Ovary (tissue), 10 donors: ENCODE measurements at regions of chr7 and their contacts with region 1.

Region 1: DNA sequence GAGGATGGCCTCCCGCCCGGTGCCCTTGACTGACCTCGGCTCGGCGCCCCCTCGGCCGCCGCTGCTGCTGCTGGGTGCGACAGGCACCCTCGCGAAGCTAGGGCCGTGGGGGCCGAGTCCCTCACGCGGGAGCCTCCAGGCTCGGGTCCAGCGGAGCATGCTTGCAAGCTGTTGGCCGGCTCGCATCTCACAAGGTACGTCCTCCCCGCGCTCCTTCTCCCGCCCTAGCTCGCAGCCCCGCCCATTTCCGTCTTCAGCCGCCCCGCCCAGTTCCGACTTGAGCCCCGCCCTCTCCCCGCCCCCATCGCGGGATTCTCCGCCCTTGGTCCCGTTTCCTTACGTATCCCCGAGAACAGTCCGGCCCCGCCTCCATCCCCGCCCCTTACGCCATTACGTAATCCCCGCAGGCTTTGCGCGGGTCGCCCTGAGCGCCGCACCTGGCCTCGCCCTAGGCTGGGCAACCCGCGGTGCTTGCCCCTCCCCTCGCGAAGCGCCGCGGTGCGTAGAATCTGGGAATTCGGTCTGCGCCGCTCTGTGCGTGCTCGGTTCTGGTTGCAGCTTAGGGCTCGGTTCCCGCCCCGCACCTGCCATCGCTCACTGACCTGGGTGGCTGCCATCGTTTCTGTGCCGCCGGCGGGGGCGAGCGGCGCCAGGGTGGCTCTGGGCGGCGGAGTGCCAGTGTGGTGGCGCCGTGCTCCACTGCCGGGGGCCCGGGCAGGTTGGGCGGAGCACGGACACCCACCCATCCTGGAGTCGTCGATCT is at the start of gene ABHD11:
- DNase-seq: peak; percentile 97 to 100 (median 99)
- H3K4me3 ChIP-seq: peak within 1 kb of the TSS; percentile 56
- H3K27ac ChIP-seq: peak within 1 kb of the TSS; percentile 76 to 93
- H3K4me1 ChIP-seq: peaks cover 6% of the 10 kb centered on the region
- H3K27me3 ChIP-seq: no peaks in the 10 kb centered on the region
- CTCF ChIP-seq: peak in 1 of 3 donors; percentile 8
- EP300 ChIP-seq: peak; percentile 26
- POLR2A ChIP-seq: peak; percentile 97
- total RNA-seq, gene ABHD11: 8.0 to 34.6 (median 11.4) TPM

Region 2: GRCh38 chr7:73842247-73842895 is 103.6 kb after region 1 on chr7 and contains the start of gene METTL27:
- intact Hi-C with region 1: loop called in 1 of 4 experiments (anchors 10 kb)
- DNase-seq: peak; percentile 91 to 94 (median 93)
- H3K4me3 ChIP-seq: peak within 1 kb of the TSS; percentile 65
- H3K27ac ChIP-seq: peak within 1 kb of the TSS in 1 of 2 donors; percentile 32
- H3K4me1 ChIP-seq: no peaks in the 10 kb centered on the region
- H3K27me3 ChIP-seq: no peaks in the 10 kb centered on the region
- CTCF ChIP-seq: no peak
- EP300 ChIP-seq: no peak
- POLR2A ChIP-seq: peak; percentile 58
- total RNA-seq, gene METTL27: 1.8 to 25.6 (median 4.3) TPM

Region 3: DNA sequence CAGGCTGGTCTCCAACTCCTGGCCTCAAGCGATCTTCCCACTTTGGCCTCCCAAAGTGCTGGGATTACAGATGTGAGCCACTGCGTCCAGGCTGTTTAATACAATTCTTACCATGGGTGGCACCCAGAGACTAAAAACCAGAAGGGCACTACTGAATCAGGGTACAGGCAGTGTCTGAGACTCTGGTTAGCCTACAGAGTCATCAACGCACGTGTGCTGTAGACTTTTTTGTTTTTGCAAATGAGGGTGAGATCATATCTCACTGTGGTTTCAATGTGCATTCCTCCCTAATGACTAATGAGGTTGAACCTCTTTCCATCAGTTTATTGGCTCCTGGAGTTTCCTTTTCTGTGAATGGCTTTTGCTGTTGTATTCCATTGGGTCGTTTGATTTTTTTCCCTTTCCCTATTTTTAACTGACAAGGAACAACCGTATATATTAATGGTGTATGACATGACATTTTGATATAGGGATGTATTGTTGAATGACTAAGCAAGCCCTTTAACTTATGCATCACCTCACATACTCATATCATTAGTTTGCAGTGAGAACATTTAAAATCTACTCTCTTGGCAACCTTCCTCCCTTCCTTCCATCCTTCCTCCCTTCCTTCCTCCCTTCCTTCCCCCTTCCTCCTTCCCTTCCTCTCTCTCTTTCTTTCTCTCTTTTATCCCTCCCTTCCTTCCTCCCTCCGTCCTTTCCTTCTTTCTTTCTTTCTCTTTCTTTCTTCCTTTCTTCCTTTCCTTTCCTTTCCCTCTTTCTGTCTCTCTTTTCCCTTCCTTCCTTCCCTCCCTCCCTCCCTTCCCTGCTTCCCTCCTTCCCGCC is 112.8 kb after region 1 on chr7:
- intact Hi-C with region 1: loop called in 3 of 4 experiments (anchors 10 kb)
- DNase-seq: no peak
- H3K4me3 ChIP-seq: no peak overlapping the region
- H3K27ac ChIP-seq: no peak overlapping the region
- H3K4me1 ChIP-seq: no peaks in the 10 kb centered on the region
- H3K27me3 ChIP-seq: no peaks in the 10 kb centered on the region
- CTCF ChIP-seq: no peak
- EP300 ChIP-seq: no peak
- POLR2A ChIP-seq: no peak